CD4-positive, alpha-beta T cell (primary cell): ENCODE measurements at regions of chr13 and their contacts with region 1.

Region 1: DNA sequence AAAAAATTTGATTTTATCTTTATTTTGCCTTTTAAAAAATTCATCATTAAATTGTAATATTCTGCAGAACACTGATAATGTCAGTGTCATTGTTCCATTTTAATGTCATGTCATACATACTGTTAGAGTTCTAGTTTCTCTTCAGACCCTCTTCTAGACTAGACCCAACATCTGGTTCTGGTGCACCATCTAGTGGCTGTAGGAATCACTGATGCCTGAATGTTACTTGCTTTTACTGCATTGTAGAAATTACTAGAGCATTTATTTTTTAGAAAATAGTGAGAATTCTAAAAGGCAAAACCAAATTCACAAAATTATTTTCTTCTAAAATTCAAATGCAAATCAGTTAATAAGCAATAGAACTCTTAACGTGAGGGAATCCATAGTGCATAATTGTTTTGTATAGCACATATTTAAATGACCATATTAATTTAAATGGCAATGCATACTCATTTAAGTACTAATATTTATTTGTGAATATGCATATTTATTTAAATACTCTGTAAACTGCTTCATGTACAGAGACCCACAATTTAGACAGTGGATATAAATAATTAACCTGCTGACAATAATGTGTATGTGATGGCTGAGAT is 425.7 kb downstream of the KLF12 start:
- DNase-seq: peak; percentile 10 to 86 (median 44)
- ATAC-seq: peak; percentile 99
- H3K4me3 ChIP-seq: no peak overlapping the region
- H3K4me3 Mint-ChIP-seq: no peak overlapping the region
- H3K27ac ChIP-seq: no peak overlapping the region
- H3K27ac Mint-ChIP-seq: peak overlapping the region; percentile 67
- H3K4me1 ChIP-seq: peaks cover 7% of the 10 kb centered on the region
- H3K4me1 Mint-ChIP-seq: peaks cover 24% of the 10 kb centered on the region
- H3K27me3 ChIP-seq: no peaks in the 10 kb centered on the region
- H3K27me3 Mint-ChIP-seq: no peaks in the 10 kb centered on the region
- CTCF ChIP-seq: peak; percentile 96

Region 2: DNA sequence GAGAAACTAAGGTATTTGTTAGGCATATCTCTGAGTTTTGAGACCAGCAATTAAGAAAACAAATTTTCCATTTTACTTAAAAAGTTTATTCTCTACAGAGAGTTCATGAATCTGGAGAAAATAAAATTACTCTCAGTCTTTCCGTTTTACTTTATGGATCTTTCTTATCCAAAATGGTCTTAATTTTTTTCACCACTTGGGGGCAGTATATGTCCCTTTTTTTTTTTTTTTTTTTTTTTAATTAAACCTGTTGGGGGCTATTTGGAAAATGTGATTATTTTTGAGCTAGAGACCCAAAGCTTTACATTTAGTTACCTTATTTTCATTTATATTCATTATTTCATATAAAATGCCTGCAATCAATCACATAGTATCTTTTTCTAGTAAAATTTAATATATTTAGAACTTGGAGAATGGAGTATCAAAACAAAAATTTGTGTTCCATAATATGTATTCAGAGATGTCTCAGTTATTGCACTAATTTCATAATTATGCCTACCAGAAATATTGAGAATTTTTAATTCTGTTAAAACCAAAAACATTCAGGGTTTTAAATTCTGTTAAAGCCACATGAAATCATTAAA is 899.5 kb before region 1 on chr13:
- CTCF ChIA-PET with region 1: no interaction called
- POLR2A ChIA-PET with region 1: no interaction called
- intact Hi-C with region 1: loop called (anchors 1 to 2 kb)
- DNase-seq: peak in 3 of 14 experiments; percentile 19 to 56 (median 55)
- ATAC-seq: peak; percentile 29
- H3K4me3 ChIP-seq: no peak overlapping the region
- H3K4me3 Mint-ChIP-seq: no peak overlapping the region
- H3K27ac ChIP-seq: no peak overlapping the region
- H3K27ac Mint-ChIP-seq: peak overlapping the region; percentile 49
- H3K4me1 ChIP-seq: no peaks in the 10 kb centered on the region
- H3K4me1 Mint-ChIP-seq: no peaks in the 10 kb centered on the region
- H3K27me3 ChIP-seq: no peaks in the 10 kb centered on the region
- H3K27me3 Mint-ChIP-seq: no peaks in the 10 kb centered on the region
- CTCF ChIP-seq: peak; percentile 90

Region 3: GRCh38 chr13:72920097-72920496 is 788.4 kb before region 1 on chr13:
- CTCF ChIA-PET with region 1: no interaction called
- POLR2A ChIA-PET with region 1: no interaction called
- intact Hi-C with region 1: loop called in 1 of 2 experiments (anchors 10 kb)
- DNase-seq: no peak
- ATAC-seq: no peak
- H3K4me3 ChIP-seq: no peak overlapping the region
- H3K4me3 Mint-ChIP-seq: no peak overlapping the region
- H3K27ac ChIP-seq: no peak overlapping the region
- H3K27ac Mint-ChIP-seq: no peak overlapping the region
- H3K4me1 ChIP-seq: no peaks in the 10 kb centered on the region
- H3K4me1 Mint-ChIP-seq: no peaks in the 10 kb centered on the region
- H3K27me3 ChIP-seq: no peaks in the 10 kb centered on the region
- H3K27me3 Mint-ChIP-seq: no peaks in the 10 kb centered on the region
- CTCF ChIP-seq: no peak

Region 4: DNA sequence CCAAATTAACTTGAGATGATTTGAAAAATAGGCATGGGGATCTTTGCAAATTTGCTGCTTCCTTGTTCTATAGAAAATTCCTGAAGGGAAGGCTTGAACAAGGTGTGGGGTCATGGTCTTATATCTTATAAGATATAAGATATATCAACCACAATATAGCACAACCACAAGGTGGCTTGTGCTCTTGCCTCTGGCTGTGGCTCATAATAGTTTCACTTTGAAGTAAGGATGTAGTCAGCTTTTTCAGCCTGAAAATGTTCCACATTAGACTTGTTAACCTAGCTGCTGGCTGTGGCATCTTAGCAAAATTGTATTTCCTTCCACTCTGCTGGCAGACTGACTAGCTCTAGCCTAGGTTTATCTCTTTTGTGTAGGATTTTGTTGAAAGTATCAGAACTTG is 479.9 kb before region 1 on chr13:
- CTCF ChIA-PET with region 1: no interaction called
- POLR2A ChIA-PET with region 1: no interaction called
- intact Hi-C with region 1: loop called (anchors 1 to 5 kb)
- DNase-seq: peak in 4 of 14 experiments; percentile 16 to 71 (median 52)
- ATAC-seq: peak; percentile 67
- H3K4me3 ChIP-seq: no peak overlapping the region
- H3K4me3 Mint-ChIP-seq: no peak overlapping the region
- H3K27ac ChIP-seq: peak overlapping the region in 1 of 2 donors; percentile 32
- H3K27ac Mint-ChIP-seq: peak overlapping the region; percentile 79
- H3K4me1 ChIP-seq: peaks cover 32% of the 10 kb centered on the region
- H3K4me1 Mint-ChIP-seq: peaks cover 57% of the 10 kb centered on the region
- H3K27me3 ChIP-seq: no peaks in the 10 kb centered on the region
- H3K27me3 Mint-ChIP-seq: no peaks in the 10 kb centered on the region
- CTCF ChIP-seq: peak; percentile 28

Region 5: GRCh38 chr13:73521290-73521624 is 187.2 kb before region 1 on chr13:
- CTCF ChIA-PET with region 1: no interaction called
- POLR2A ChIA-PET with region 1: no interaction called
- intact Hi-C with region 1: loop called in 1 of 2 experiments (anchors 10 kb)
- DNase-seq: peak in 8 of 14 experiments; percentile 1 to 68 (median 31)
- ATAC-seq: peak; percentile 84
- H3K4me3 ChIP-seq: peak overlapping the region; percentile 50
- H3K4me3 Mint-ChIP-seq: peak overlapping the region; percentile 84
- H3K27ac ChIP-seq: peak overlapping the region; percentile 31 to 59
- H3K27ac Mint-ChIP-seq: peak overlapping the region; percentile 90
- H3K4me1 ChIP-seq: peaks cover 9% of the 10 kb centered on the region
- H3K4me1 Mint-ChIP-seq: peaks cover 23% of the 10 kb centered on the region
- H3K27me3 ChIP-seq: no peaks in the 10 kb centered on the region
- H3K27me3 Mint-ChIP-seq: no peaks in the 10 kb centered on the region
- CTCF ChIP-seq: no peak

Region 6: DNA sequence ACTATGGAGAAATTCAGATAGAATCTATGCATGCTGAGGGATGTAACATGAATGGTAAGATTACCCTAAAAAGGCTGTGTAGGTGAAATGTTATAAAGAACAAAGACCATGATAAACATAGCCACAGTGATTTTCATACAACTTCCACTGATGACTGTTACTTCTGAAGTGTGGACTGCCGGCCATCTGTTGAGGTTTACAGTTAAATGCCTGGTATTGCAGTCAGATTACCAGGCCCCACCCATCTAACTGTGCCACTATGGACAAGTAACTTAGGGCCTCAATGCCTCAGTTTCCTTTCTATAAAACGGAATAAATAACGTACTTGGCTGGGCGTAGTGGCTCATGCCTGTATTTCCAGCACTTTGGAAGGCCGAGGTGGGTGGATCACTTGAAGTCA is 30.1 kb after region 1 on chr13:
- CTCF ChIA-PET with region 1: no interaction called
- POLR2A ChIA-PET with region 1: no interaction called
- intact Hi-C with region 1: no loop called
- DNase-seq: no peak
- ATAC-seq: no peak
- H3K4me3 ChIP-seq: no peak overlapping the region
- H3K4me3 Mint-ChIP-seq: no peak overlapping the region
- H3K27ac ChIP-seq: no peak overlapping the region
- H3K27ac Mint-ChIP-seq: no peak overlapping the region
- H3K4me1 ChIP-seq: peaks cover 3% of the 10 kb centered on the region
- H3K4me1 Mint-ChIP-seq: peaks cover 50% of the 10 kb centered on the region
- H3K27me3 ChIP-seq: no peaks in the 10 kb centered on the region
- H3K27me3 Mint-ChIP-seq: no peaks in the 10 kb centered on the region
- CTCF ChIP-seq: no peak

Region 7: DNA sequence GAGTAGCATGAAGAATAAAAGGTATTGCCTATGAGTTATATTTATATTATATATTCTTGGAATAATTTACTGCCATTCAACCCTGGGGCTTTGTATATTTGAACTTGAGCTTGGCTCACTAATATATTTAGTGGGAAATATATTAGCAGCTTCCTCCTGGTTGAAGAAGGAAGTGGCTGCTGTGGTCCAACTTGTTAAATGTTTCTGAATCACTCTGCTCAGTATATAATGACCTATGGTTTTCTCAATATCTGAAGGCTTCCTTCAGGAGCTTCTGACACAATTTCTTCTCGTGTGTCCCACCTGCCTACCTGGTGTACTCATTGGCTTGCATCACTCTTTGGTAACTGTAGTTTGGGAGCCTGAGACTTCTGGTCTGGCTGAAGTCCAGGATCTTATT is 1127.1 kb after region 1 on chr13:
- CTCF ChIA-PET with region 1: no interaction called
- POLR2A ChIA-PET with region 1: no interaction called
- intact Hi-C with region 1: no loop called
- DNase-seq: peak in 1 of 14 experiments; percentile 31
- ATAC-seq: no peak
- H3K4me3 ChIP-seq: no peak overlapping the region
- H3K4me3 Mint-ChIP-seq: no peak overlapping the region
- H3K27ac ChIP-seq: no peak overlapping the region
- H3K27ac Mint-ChIP-seq: no peak overlapping the region
- H3K4me1 ChIP-seq: no peaks in the 10 kb centered on the region
- H3K4me1 Mint-ChIP-seq: no peaks in the 10 kb centered on the region
- H3K27me3 ChIP-seq: no peaks in the 10 kb centered on the region
- H3K27me3 Mint-ChIP-seq: no peaks in the 10 kb centered on the region
- CTCF ChIP-seq: no peak

Region 8: DNA sequence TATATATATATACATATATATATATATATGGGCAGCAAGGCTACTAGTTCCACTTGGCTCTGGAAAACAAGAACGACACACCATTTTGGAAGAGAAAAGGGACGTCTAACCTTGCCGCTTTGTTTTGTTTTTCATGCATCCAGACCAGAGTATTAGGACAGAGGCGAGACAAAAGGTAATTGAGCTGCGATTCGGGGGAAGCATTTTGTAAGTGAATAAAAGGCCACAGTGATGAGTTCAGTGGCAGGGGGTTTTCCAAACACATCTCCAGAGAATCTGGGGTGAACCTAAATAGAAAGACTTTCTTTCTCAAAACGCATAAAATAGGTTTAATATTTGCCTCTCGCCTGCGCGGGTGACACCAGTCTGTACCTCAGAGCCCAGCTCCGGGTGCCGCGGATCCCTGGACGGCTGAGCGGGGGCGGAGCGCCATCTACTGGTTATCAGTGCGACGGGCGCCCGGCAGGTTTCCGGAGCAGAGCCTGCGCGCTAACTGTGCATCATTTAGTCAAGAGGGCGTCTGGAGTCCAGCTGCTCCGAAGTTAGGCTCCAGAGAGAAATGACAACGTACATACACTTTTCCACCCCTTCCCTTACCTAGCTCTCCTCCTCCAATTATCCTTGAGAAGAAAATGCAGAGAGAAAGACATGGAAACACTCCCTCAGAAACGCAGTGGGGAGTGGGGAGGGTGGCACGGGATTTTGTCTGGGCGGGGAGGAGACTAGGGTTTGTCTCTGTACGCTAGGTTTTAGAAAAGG is 1511.2 kb after region 1 on chr13:
- CTCF ChIA-PET with region 1: no interaction called
- POLR2A ChIA-PET with region 1: no interaction called
- intact Hi-C with region 1: loop called (anchors 5 kb)
- DNase-seq: peak; percentile 70 to 90 (median 82)
- ATAC-seq: peak; percentile 99
- H3K4me3 ChIP-seq: no peak overlapping the region
- H3K4me3 Mint-ChIP-seq: peak overlapping the region; percentile 52
- H3K27ac ChIP-seq: no peak overlapping the region
- H3K27ac Mint-ChIP-seq: no peak overlapping the region
- H3K4me1 ChIP-seq: peaks cover 7% of the 10 kb centered on the region
- H3K4me1 Mint-ChIP-seq: peaks cover 8% of the 10 kb centered on the region
- H3K27me3 ChIP-seq: peaks cover 0 to 22% of the 10 kb centered on the region in 2 experiments
- H3K27me3 Mint-ChIP-seq: peaks cover 52% of the 10 kb centered on the region
- CTCF ChIP-seq: peak; percentile 95